ENCODE measurements at regions of chr1 and their contacts with region 1.

Region 1: DNA sequence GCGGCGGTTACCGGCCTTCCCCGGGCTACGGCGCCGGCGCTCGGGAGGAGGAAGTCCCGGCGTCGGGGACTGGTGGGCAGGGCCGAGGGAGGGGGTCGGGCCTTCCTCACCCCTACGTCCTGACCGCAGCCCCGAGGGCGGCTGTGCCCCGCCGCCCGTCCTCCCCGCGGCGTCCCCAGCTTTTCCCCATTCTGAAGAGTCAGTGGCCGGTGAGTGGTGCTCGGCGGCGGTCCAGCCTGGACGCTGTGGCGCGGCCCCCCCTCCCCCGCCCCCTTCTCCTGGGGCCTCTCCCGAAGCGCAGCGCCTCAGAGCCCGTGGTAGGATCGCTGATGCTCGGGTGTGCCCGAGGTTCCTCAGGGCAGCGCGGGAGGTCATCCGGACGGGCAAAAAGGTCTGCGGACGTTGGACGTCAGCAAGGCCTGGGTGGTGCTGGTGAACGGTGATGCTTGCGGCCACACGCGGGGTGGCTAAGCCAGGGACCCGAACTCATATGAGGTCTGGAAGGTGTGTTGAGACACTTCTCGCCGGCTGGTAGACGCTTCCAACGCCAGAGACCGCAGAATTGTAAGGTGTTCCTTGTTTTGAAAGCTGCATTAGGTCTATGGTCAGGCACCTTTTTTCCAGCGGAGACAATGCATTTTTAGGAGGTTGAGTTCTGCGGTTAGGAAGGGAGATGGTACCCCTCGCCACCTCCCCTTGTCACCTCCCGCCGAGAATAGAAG is 725 bp downstream of the SLC25A33 start:
- DNase-seq: no peak
- ATAC-seq: peak; percentile 68
- H3K4me3 ChIP-seq: peak overlapping the region; percentile 91
- H3K27ac ChIP-seq: peak overlapping the region; percentile 70
- H3K4me1 ChIP-seq: peaks cover 14% of the 10 kb centered on the region
- H3K27me3 ChIP-seq: no peaks in the 10 kb centered on the region
- CTCF ChIP-seq: no peak
- EP300 ChIP-seq: no peak
- POLR2A ChIP-seq: peak; percentile 38; the same call in 1 of the 2 replicates
- RAD21 ChIP-seq: no peak

Region 2: DNA sequence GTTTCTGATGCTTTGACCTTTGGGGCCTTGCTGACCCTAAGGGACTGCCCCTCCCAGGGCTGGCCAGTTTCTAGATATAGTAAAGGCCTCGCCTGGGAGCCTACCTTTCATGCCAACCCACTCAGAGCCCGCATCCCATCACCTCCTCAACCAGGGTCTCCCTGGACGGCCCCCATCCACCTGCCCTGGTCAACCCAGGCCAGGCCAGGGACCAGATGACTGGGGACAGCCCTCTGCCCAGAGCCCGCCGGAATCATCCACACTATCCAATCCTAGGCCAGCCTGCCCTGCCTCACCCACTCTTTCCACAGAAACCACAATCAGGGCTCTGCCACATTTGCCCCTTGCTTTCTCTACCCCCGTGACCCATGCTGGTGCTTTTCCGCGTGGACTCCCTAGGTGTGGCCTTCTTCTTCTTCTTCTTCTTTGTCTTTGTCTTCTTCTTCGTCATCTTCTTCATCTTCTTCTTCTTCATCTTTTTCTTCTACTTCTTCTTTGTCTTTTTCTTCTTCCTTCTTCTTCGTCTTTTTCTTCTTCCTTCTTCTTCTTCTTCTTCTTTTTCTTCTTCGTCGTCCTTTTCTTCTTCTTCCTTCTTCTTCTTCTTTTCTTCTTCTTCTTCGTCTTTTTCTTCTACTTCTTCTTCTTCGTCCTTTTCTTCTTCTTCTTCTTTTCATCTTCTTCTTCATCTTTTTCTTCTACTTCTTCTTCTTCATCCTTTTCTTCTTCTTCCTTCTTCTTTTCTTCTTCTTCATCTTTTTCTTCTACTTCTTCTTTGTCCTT is 317.0 kb before region 1 on chr1:
- CTCF ChIA-PET with region 1: no interaction called
- POLR2A ChIA-PET with region 1: no interaction called
- RAD21 ChIA-PET with region 1: no interaction called
- SMC1A ChIA-PET with region 1: no interaction called
- in situ Hi-C with region 1: no loop called
- intact Hi-C with region 1: no loop called
- DNase-seq: no peak
- ATAC-seq: no peak
- H3K4me3 ChIP-seq: no peak overlapping the region
- H3K27ac ChIP-seq: no peak overlapping the region
- H3K4me1 ChIP-seq: no peaks in the 10 kb centered on the region
- H3K27me3 ChIP-seq: no peaks in the 10 kb centered on the region
- CTCF ChIP-seq: no peak
- EP300 ChIP-seq: no peak
- POLR2A ChIP-seq: no peak
- RAD21 ChIP-seq: no peak

Region 3: GRCh38 chr1:9251501-9251900 is 288.5 kb before region 1 on chr1:
- CTCF ChIA-PET with region 1: no interaction called
- POLR2A ChIA-PET with region 1: no interaction called
- RAD21 ChIA-PET with region 1: no interaction called
- SMC1A ChIA-PET with region 1: no interaction called
- in situ Hi-C with region 1: no loop called
- intact Hi-C with region 1: no loop called
- DNase-seq: no peak
- ATAC-seq: no peak
- H3K4me3 ChIP-seq: no peak overlapping the region
- H3K27ac ChIP-seq: no peak overlapping the region
- H3K4me1 ChIP-seq: no peaks in the 10 kb centered on the region
- H3K27me3 ChIP-seq: no peaks in the 10 kb centered on the region
- CTCF ChIP-seq: no peak
- EP300 ChIP-seq: no peak
- POLR2A ChIP-seq: no peak
- RAD21 ChIP-seq: no peak

Region 4: DNA sequence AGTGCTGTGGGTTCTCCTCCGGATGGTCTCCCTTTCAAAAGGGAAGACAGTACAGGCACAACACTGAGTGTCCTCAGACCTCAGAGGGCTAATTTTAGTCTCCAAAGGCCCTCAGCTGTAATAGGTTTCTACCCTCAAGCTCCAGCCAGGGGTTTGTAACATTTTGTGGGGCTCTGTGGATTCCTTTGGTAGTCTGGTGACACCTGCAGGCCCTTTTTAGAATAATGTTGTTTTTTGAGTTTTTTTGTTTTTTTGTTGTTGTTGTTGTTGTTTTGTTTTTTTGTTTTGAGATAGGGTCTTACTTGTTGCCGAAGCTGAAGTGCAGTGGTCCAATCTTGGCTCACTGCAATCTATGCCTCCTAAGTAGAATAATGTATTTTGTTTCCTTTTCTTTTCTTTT is 33.7 kb after region 1 on chr1:
- CTCF ChIA-PET with region 1: no interaction called
- POLR2A ChIA-PET with region 1: no interaction called
- RAD21 ChIA-PET with region 1: no interaction called
- SMC1A ChIA-PET with region 1: no interaction called
- in situ Hi-C with region 1: no loop called
- intact Hi-C with region 1: loop called (anchors 1 kb)
- DNase-seq: no peak
- ATAC-seq: 0 out of 3 replicates have a peak, but pooled peaks have one; percentile 27
- H3K4me3 ChIP-seq: no peak overlapping the region
- H3K27ac ChIP-seq: no peak overlapping the region
- H3K4me1 ChIP-seq: no peaks in the 10 kb centered on the region
- H3K27me3 ChIP-seq: no peaks in the 10 kb centered on the region
- CTCF ChIP-seq: peak; percentile 21 to 39 (median 35); a peak in 4 of 6 replicates
- EP300 ChIP-seq: no peak
- POLR2A ChIP-seq: no peak
- RAD21 ChIP-seq: peak; percentile 60

Region 5: GRCh38 chr1:9732123-9732971 is 192.4 kb after region 1 on chr1:
- CTCF ChIA-PET with region 1: no interaction called
- POLR2A ChIA-PET with region 1: no interaction called
- RAD21 ChIA-PET with region 1: no interaction called
- SMC1A ChIA-PET with region 1: no interaction called
- in situ Hi-C with region 1: no loop called
- intact Hi-C with region 1: no loop called
- DNase-seq: no peak
- ATAC-seq: peak; percentile 16
- H3K4me3 ChIP-seq: no peak overlapping the region
- H3K27ac ChIP-seq: no peak overlapping the region
- H3K4me1 ChIP-seq: peaks cover 5% of the 10 kb centered on the region; the same call in 1 of the 2 replicates
- H3K27me3 ChIP-seq: no peaks in the 10 kb centered on the region
- CTCF ChIP-seq: no peak
- EP300 ChIP-seq: no peak
- POLR2A ChIP-seq: peak; percentile 38; the same call in 1 of the 2 replicates
- RAD21 ChIP-seq: no peak

Region 6: GRCh38 chr1:9784508-9785133 is 244.6 kb after region 1 on chr1:
- CTCF ChIA-PET with region 1: no interaction called
- POLR2A ChIA-PET with region 1: no interaction called
- RAD21 ChIA-PET with region 1: no interaction called
- SMC1A ChIA-PET with region 1: no interaction called
- in situ Hi-C with region 1: no loop called
- intact Hi-C with region 1: no loop called
- DNase-seq: peak; percentile 61
- ATAC-seq: peak; percentile 28
- H3K4me3 ChIP-seq: peak overlapping the region; percentile 4; the same call in 1 of the 2 replicates
- H3K27ac ChIP-seq: peak overlapping the region; percentile 69
- H3K4me1 ChIP-seq: peaks cover 46% of the 10 kb centered on the region
- H3K27me3 ChIP-seq: no peaks in the 10 kb centered on the region
- CTCF ChIP-seq: peak; percentile 79 to 92 (median 86)
- EP300 ChIP-seq: no peak
- POLR2A ChIP-seq: no peak
- RAD21 ChIP-seq: peak; percentile 96

Measured in GM12878 (cell line).